Activated CD4-positive, alpha-beta memory T cell treated with anti-CD3 and anti-CD28 coated beads for 36 hours (primary cell): ENCODE measurements at regions of chr19 and their contacts with region 1.

Region 1: DNA sequence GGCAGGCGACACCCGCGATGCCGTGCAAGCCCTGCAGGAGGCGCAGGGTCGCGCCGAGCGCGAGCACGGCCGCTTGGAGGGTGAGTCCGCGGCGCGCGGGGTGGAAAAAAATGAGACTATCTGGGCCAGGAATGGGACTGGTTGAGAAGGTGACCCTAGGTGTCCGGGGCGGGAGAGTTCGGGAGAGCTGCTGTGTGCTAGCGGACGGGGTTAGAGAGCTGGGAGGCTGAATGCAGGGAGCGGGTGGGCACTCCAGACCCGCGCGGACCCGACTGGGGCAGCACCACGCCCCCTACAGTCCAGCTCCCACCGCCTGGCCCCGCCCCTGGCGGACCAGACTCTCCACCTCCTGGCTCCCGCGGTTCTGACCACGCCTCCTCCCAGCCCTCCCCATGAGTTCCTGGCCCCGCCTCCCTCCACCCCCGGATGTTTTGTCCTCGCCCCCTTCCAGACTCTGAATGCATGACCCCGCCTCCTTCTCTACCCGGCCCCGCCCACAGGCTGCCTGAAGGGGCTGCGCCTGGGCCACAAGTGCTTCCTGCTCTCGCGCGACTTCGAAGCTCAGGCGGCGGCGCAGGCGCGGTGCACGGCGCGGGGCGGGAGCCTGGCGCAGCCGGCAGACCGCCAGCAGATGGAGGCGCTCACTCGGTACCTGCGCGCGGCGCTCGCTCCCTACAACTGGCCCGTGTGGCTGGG is 1.5 kb downstream of the CLEC11A start:
- DNase-seq: peak; percentile 97
- H3K4me3 Mint-ChIP-seq: peak overlapping the region; percentile 62
- H3K27ac Mint-ChIP-seq: no peak overlapping the region
- H3K4me1 Mint-ChIP-seq: peaks cover 22% of the 10 kb centered on the region
- H3K27me3 Mint-ChIP-seq: peaks cover 65% of the 10 kb centered on the region

Region 2: DNA sequence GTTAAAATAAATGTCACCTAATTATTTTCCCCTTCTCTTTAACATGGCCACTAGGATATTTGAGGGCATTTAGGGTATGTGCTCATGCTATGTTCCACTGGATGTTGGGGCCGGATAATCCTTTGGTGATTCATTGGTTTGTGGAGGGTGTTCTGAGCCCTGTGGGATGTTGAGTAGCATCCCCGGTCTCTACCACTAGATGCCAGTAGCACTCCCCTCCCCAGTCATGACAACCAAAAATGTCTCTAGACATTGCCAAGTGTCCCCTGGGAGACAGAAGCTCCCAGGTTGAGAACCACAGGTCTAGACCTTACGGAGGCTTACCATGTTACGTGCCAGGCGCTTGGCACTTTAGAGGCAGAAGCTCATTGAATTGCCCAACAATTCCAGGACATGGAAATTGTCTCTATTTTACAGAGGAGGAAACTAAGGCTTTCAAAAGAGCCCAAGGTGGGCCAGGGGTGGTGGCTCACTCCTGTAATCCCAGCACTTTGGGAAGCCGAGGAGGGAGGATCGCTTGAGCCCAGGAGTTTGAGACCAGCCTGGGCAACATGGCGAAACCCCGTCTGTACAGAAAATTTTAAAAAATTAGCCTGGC is 19.1 kb before region 1 on chr19:
- CTCF ChIA-PET with region 1: interaction called, 11 read pairs
- POLR2A ChIA-PET with region 1: no interaction called
- intact Hi-C with region 1: no loop called
- DNase-seq: peak; percentile 48
- H3K4me3 Mint-ChIP-seq: no peak overlapping the region
- H3K27ac Mint-ChIP-seq: no peak overlapping the region
- H3K4me1 Mint-ChIP-seq: no peaks in the 10 kb centered on the region
- H3K27me3 Mint-ChIP-seq: peaks cover 36% of the 10 kb centered on the region